GM10248 (cell line): ENCODE measurements at regions of chr16 and their contacts with region 1.

Region 1: GRCh38 chr16:2155091-2156021 is at the start of gene TRAF7:
- DNase-seq: peak; percentile 99
- CTCF ChIP-seq: no peak

Region 2: GRCh38 chr16:2003827-2004641 is 151.3 kb before region 1 on chr16:
- CTCF ChIA-PET with region 1: interaction called, 43 read pairs
- POLR2A ChIA-PET with region 1: interaction called, 13 read pairs
- DNase-seq: peak; percentile 93
- CTCF ChIP-seq: peak; percentile 90

Region 3: GRCh38 chr16:2023098-2023925 is 132.0 kb before region 1 on chr16:
- CTCF ChIA-PET with region 1: interaction called, 78 read pairs
- POLR2A ChIA-PET with region 1: interaction called, 12 read pairs
- DNase-seq: peak; percentile 98
- CTCF ChIP-seq: peak; percentile 95

Region 4: DNA sequence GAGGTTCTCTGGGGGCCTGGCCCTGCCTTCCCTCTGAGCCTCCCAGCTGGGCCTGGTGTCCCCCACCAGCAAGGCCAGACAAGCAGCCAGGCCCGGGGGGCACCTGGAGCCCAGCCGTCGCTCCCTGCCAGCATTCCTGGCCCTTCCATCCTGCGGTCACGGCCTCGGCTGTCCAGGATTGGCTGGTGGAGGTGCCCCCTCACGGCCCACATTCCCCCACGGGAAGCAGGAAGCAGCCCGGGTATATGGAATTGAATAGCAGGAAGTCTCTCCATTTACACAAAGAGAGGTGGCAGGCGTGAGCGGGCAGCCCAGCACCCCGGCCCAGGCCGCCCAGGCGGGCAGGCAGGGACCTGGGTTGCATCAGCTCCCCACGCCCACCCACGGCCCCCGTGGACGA is 14.7 kb after region 1 on chr16:
- CTCF ChIA-PET with region 1: interaction called, 4 read pairs
- POLR2A ChIA-PET with region 1: interaction called, 15 read pairs
- DNase-seq: no peak
- CTCF ChIP-seq: no peak